GM13977 (cell line): ENCODE measurements at regions of chr10 and their contacts with region 1.

Region 1: DNA sequence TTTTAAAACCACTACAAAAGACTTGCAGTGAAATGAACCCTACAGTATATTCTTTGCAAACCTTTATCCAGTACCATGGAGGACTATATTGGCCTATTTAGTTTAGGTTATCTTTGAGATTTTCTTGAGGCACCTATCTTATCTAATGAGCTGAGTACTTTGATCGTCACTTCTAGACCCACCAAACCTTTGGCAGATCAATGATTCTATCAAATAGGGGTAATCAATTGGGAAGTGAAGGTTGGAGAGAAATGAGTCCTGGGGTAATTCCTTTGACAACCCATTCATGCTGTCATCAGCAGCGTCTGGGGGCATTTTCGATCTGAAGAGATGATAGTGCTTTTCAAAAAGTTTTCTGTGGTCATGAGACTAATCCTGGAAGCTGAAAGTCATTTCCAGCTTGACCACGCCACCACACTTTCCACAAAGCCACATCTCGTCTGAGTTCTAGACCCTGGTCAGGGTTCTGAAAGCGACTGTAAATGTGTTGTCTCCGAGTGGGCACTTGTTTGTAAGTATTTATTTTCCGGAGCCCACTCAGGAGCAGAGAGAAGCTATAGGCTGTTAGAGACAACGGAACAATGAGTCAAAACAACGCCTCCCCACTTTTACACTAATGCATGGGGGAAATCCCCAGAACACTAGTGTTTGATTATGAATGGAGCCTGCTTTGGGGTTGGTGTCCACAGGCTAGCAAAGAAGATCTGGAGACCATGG is 4.8 kb downstream of the EGR2 start:
- DNase-seq: peak; percentile 90
- CTCF ChIP-seq: no peak

Region 2: DNA sequence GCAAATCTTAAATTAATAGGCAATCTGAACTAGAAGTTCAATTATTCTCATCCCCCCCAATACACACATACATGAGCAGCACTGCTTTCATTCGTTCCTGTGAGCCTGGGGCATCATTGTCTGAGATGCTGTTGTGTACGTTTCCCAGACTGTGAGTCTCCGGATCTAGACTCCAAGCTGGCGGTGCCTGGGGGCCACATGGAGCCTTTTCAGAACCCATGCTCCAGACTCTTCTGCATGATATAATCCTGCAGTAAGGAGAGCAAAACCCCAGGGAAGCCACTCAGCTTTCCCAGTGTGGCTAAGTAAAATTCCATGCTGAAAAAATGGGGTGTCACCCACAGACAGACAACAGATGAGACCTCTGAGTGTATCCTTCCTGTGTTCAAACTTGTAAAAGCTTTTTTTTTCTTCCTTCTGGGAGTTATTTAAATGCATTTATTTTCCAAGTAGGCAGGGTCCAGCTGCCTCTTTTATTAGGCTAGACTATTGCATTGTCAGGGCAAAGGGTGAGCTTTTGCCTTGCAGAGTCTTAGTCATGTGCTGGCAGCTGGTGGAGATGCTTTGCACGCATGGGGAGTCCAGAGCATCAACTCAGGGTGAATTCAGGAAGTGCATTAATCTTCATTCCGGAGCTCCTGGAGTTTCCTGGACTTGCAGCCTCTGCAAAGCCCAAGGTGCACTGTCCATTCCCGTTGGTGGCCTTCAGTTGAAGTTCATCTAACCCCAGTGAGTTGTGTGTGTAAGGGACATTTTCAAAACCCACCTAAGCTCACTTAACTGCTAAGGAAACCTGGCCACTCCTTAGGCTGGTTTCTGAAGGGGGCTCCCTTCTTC is 192.5 kb before region 1 on chr10:
- in situ Hi-C with region 1: loop called (anchors 5 kb)
- DNase-seq: no peak
- CTCF ChIP-seq: no peak

Region 3: DNA sequence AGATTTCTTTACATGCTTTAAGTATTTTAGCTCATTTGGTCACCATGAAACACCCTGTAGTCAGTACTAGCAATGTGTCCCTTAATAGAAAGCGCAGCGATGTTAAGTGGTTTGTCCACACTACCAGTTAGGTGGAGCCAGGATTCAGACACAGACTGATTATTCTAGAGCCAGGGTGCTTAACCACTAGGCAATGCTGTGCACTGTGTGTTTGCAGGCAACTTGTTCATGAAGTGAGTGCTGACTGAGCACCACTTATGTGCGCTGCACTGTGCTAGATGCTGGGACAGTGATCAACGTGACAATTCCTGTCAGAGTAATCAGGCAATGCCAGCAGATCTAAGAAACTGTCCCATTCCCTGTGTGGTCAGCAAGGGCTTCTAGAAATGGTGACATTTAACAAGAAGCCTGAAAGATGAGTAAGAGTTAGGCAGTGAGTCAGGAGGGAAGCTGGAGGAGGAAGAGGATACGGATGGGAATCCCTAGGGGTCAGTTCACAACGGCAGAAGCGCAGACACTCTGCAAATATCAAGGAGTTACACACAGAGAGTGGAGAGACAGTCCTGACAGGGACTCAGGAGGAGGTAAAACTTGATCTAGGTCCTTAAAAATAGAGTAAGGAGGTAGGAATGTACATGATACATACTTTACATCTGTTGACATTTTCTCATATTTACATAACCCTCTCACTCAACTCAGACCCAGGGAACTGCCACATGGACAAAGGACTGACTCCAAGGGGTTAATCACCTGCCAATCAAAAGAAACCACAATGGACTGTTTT is 74.6 kb after region 1 on chr10:
- in situ Hi-C with region 1: no loop called
- DNase-seq: no peak
- CTCF ChIP-seq: no peak